KBM-7 (cell line): ENCODE measurements at regions of chr11 and their contacts with region 1.

Region 1: GRCh38 chr11:75896843-75897419 is 81.9 kb downstream of the UVRAG start:
- DNase-seq: peak; percentile 76

Region 2: DNA sequence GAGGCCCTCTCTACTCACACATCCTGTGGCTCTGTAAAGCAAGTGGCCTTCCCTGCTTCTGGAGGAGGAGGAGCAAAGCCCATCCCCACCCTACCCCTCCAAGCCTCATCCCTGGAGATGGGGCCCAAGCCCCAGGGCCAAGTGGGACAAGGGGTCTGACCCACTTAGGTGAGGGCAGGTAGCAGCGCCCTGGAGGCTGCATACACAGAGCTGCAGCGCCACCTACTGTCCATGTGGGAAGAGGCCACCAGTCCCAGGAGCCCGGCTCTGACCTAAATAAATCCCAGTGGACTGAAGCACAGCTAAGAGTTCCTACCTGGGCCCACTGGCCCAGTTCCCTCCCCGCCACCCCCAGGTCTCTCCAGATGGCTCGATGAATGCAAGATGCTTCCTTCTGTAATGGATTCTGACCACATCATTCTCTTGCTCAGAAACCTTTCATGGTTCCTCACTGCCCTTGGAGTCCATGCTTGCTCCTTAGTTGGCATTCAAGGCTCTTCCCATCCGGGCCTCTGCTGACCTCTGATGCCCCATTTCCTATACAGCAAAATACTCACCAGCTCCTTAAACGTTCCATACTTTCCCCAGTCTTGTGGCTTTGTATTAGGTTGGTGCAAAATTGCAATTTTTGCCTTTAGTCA is 421.9 kb after region 1 on chr11:
- in situ Hi-C with region 1: loop called (anchors 25 kb)
- DNase-seq: peak; percentile 83